Thyroid gland (tissue), 4 donors: ENCODE measurements at regions of chr22 and their contacts with region 1.

Region 1: GRCh38 chr22:37676736-37677492 is 1.5 kb downstream of the LGALS1 start:
- DNase-seq: peak; percentile 84 to 85
- H3K4me3 ChIP-seq: peak overlapping the region in 1 of 3 donors; percentile 28
- H3K27ac ChIP-seq: peak overlapping the region; percentile 79 to 92 (median 88)
- H3K4me1 ChIP-seq: peaks cover 27 to 45% of the 10 kb centered on the region in 2 donors
- H3K27me3 ChIP-seq: no peaks in the 10 kb centered on the region
- CTCF ChIP-seq: no peak
- POLR2A ChIP-seq: no peak

Region 2: DNA sequence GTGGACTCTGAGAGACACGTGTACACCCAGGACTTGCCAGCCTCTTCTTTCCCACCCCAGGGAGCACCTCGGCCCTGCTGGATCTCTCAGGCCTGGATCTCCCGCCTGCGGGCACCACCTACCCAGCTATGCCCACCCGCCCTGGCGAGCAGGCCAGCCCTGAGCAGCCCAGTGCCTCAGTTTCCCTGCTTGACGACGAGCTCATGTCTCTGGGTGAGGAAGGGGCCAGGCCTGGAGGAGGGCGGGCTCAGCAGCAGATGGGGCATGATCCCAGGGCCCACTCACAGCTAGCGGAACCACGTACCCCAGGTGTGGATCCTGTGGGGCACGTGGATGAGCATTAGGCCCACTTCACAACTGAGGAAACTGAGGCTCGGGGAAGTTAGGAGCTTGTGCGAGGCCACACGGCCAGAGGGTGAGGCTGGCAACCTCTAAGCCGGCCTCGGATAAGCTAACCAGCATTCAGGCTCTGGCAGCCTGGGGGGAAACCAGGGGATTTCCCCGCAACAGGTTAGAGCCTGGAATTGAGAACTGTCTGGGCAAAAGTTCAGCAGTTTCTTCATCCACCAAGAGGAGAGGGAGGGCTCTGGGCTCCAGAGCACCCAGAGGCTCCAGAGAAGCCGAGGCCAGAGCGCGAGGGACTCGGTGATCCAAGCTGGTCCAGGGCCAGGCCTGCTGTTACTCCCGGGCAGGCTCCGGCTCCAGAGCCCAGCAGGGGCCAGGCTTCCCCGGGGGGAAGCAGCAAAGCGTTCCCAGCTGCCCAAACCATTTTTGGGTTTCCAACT is 51.0 kb before region 1 on chr22:
- intact Hi-C with region 1: loop called (anchors 5 kb)
- DNase-seq: no peak
- H3K4me3 ChIP-seq: no peak overlapping the region
- H3K27ac ChIP-seq: peak overlapping the region in 1 of 3 donors; percentile 31
- H3K4me1 ChIP-seq: peaks cover 0 to 21% of the 10 kb centered on the region in 2 donors
- H3K27me3 ChIP-seq: no peaks in the 10 kb centered on the region
- CTCF ChIP-seq: no peak
- POLR2A ChIP-seq: no peak

Region 3: GRCh38 chr22:37741312-37741795 is 64.4 kb after region 1 on chr22:
- intact Hi-C with region 1: no loop called
- DNase-seq: peak; percentile 95
- H3K4me3 ChIP-seq: no peak overlapping the region
- H3K27ac ChIP-seq: peak overlapping the region; percentile 37 to 90 (median 69)
- H3K4me1 ChIP-seq: peaks cover 11 to 39% of the 10 kb centered on the region in 2 donors
- H3K27me3 ChIP-seq: no peaks in the 10 kb centered on the region
- CTCF ChIP-seq: no peak
- POLR2A ChIP-seq: no peak

Region 4: GRCh38 chr22:37870273-37870672 is 193.4 kb after region 1 on chr22:
- intact Hi-C with region 1: no loop called
- DNase-seq: no peak
- H3K4me3 ChIP-seq: no peak overlapping the region
- H3K27ac ChIP-seq: peak overlapping the region in 1 of 3 donors; percentile 9
- H3K4me1 ChIP-seq: peaks cover 12 to 35% of the 10 kb centered on the region in 2 donors
- H3K27me3 ChIP-seq: no peaks in the 10 kb centered on the region
- CTCF ChIP-seq: no peak
- POLR2A ChIP-seq: no peak